Astrocyte of the cerebellum (primary cell): ENCODE measurements at regions of chr13 and their contacts with region 1.

Region 1: GRCh38 chr13:104057851-104058250 is 991.6 kb upstream of the SLC10A2 start:
- DNase-seq: no peak
- H3K4me3 ChIP-seq: no peak overlapping the region
- CTCF ChIP-seq: no peak

Region 2: DNA sequence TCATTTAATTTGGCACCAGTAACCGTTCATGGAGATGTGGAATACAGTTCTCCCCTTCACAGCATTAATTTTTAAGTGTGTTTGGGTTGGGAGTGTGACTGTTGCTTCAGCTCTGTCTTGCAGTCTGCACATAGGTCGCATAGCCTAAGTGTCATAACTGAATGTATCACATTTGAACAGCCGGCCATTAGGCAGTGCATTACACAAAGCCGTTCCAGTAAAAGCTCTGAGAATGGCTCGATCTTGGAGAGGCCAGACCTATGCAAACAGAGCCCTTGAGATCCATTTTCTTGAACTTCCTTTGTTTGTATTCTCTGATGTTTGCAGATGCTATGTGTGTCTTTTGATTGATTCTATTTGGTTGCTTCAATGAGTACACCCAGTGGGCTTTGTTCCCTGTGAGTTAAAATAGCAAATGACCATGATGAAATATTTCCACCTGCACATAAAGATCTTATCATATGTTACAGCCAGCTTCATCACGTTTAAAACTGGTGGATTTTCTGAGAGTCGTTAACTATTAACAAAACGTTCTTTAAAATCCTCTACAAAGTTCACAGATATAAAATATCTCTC is 113.2 kb after region 1 on chr13:
- in situ Hi-C with region 1: loop called (anchors 25 kb)
- DNase-seq: no peak
- H3K4me3 ChIP-seq: no peak overlapping the region
- CTCF ChIP-seq: no peak